HCT116 (cell line): ENCODE measurements at regions of chr9 and their contacts with region 1.

Region 1: GRCh38 chr9:127916665-127917613 is at the start of gene ST6GALNAC4:
- DNase-seq: no peak
- ATAC-seq: peak; percentile 86
- H3K4me3 ChIP-seq: peak within 1 kb of the TSS; percentile 85 to 91
- H3K27ac ChIP-seq: peak within 1 kb of the TSS; percentile 96
- H3K4me1 ChIP-seq: peaks cover 52 to 70% of the 10 kb centered on the region in 2 experiments
- H3K27me3 ChIP-seq: no peaks in the 10 kb centered on the region
- CTCF ChIP-seq: no peak
- POLR2A ChIP-seq: peak; percentile 22
- RAD21 ChIP-seq: no peak
- total RNA-seq, gene ST6GALNAC4: 49.4 TPM

Region 2: DNA sequence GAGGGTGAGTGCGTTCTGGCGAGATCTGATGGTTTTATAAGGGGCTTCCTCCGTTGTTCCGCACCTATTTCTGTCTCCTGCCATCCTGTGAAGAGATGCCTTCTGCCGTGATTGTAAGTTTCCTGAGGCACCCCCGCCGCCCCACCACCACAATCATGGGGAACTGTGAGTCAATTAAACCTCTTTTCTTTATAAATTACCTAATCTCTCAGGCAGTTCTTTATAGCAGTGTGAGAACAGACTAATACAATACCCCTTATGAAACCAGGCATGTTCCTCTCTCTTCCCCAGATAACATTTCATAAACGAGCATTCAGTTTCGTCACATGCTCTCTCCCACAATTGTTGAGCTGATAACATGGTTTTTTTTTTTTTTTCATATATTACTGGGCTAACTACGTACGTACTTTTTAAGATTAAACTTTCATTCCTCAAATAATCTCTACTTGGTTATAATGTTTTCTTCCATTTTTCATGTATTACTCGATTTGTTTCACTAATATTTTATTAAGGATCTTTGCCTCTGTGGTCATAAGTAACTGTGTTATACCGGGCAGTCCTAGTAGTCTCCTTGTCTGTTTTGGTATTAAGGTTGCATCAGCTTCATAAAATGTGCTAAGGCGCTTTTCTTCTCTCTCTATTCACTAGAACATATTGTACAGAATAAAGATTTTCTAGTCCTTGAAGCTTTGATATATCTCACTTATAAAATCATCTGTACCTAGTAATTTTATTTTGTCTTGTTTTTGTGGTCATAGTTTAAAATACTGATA is 1655.2 kb before region 1 on chr9:
- CTCF ChIA-PET with region 1: no interaction called
- POLR2A ChIA-PET with region 1: no interaction called
- RAD21 ChIA-PET with region 1: no interaction called
- intact Hi-C with region 1: no loop called
- DNase-seq: no peak
- ATAC-seq: no peak
- H3K4me3 ChIP-seq: no peak overlapping the region
- H3K27ac ChIP-seq: no peak overlapping the region
- H3K4me1 ChIP-seq: no peaks in the 10 kb centered on the region
- H3K27me3 ChIP-seq: no peaks in the 10 kb centered on the region
- CTCF ChIP-seq: no peak
- POLR2A ChIP-seq: no peak
- RAD21 ChIP-seq: no peak

Region 3: DNA sequence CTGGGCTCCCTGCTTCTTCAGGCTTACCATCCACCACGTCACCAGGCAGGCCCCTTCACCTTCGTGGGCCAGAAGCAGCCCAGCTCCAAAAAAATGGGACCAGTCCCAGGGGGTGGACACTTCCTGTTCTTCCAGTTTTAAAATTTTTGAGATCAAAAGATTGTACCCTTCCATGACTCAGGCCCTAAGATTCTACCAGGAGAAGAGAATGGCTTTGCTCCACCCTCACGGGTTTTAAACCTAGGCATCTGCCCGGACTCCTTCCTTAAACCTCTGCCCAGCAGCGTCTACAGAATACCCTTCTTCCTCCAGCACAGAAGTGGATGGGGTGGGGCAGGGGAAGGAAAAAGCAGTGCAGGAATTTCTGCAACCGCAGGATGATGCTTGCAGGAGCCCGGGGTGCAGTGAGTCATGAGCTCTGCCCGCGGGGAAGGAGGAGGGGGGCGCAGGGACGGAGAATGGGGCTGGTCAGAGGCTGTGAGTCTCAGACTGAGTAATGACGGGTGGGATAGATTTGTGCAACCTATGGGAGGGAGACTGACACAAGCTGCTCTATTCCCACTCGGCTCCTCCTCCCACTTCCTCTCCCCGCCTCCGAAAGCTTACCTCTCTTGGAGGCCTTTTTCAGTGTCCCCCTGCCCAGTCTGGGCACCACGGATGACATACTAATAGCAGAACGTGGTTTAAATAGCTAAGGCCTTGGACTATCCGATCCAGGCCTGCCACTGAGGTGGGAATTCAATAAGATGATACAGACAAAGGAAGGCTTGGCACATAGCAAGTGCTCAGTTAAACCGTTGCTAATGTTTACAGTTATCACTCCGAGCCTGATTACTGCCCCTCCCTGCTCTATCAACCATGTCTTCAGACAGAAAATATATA is 355.1 kb before region 1 on chr9:
- CTCF ChIA-PET with region 1: no interaction called
- POLR2A ChIA-PET with region 1: interaction called, 3 read pairs
- RAD21 ChIA-PET with region 1: no interaction called
- intact Hi-C with region 1: loop called (anchors 5 kb)
- DNase-seq: peak; percentile 97
- ATAC-seq: peak; percentile 82
- H3K4me3 ChIP-seq: peak overlapping the region; percentile 27 to 41
- H3K27ac ChIP-seq: peak overlapping the region; percentile 97
- H3K4me1 ChIP-seq: peaks cover 95 to 100% of the 10 kb centered on the region in 2 experiments
- H3K27me3 ChIP-seq: no peaks in the 10 kb centered on the region
- CTCF ChIP-seq: no peak
- POLR2A ChIP-seq: no peak
- RAD21 ChIP-seq: no peak

Region 4: GRCh38 chr9:127586537-127586936 is 330.4 kb before region 1 on chr9:
- CTCF ChIA-PET with region 1: interaction called, 3 read pairs
- POLR2A ChIA-PET with region 1: no interaction called
- RAD21 ChIA-PET with region 1: interaction called in 1 of 2 experiments, 3 read pairs
- intact Hi-C with region 1: loop called (anchors 1 kb)
- DNase-seq: no peak
- ATAC-seq: peak; percentile 88
- H3K4me3 ChIP-seq: no peak overlapping the region
- H3K27ac ChIP-seq: no peak overlapping the region
- H3K4me1 ChIP-seq: peaks cover 5 to 24% of the 10 kb centered on the region in 2 experiments; a peak in 3 of 4 replicates
- H3K27me3 ChIP-seq: no peaks in the 10 kb centered on the region
- CTCF ChIP-seq: peak in 2 of 3 experiments; percentile 82 to 87; a peak in 4 of 6 replicates
- POLR2A ChIP-seq: no peak
- RAD21 ChIP-seq: no peak

Region 5: GRCh38 chr9:127785023-127785932 is 131.7 kb before region 1 on chr9:
- CTCF ChIA-PET with region 1: interaction called, 5 read pairs
- POLR2A ChIA-PET with region 1: no interaction called
- RAD21 ChIA-PET with region 1: no interaction called
- intact Hi-C with region 1: loop called (anchors 5 kb)
- DNase-seq: peak; percentile 60
- ATAC-seq: peak; percentile 67
- H3K4me3 ChIP-seq: peak overlapping the region; percentile 45 to 90
- H3K27ac ChIP-seq: peak overlapping the region; percentile 98
- H3K4me1 ChIP-seq: peaks cover 11 to 14% of the 10 kb centered on the region in 2 experiments; a peak in 3 of 4 replicates
- H3K27me3 ChIP-seq: no peaks in the 10 kb centered on the region
- CTCF ChIP-seq: peak in 2 of 3 experiments; percentile 75 to 81; a peak in 4 of 6 replicates
- POLR2A ChIP-seq: no peak
- RAD21 ChIP-seq: no peak

Region 6: GRCh38 chr9:127802576-127803443 is 114.1 kb before region 1 on chr9 and contains the start of gene FPGS:
- CTCF ChIA-PET with region 1: interaction called, 6 read pairs
- POLR2A ChIA-PET with region 1: no interaction called
- RAD21 ChIA-PET with region 1: no interaction called
- intact Hi-C with region 1: loop called (anchors 2 kb)
- DNase-seq: peak; percentile 68
- ATAC-seq: peak; percentile 84
- H3K4me3 ChIP-seq: peak within 1 kb of the TSS; percentile 69 to 73
- H3K27ac ChIP-seq: peak within 1 kb of the TSS; percentile 74
- H3K4me1 ChIP-seq: peaks cover 19 to 27% of the 10 kb centered on the region in 2 experiments
- H3K27me3 ChIP-seq: no peaks in the 10 kb centered on the region
- CTCF ChIP-seq: no peak; a peak in 1 of 6 replicates
- POLR2A ChIP-seq: no peak
- RAD21 ChIP-seq: no peak
- total RNA-seq, gene FPGS: 70.6 TPM

Region 7: DNA sequence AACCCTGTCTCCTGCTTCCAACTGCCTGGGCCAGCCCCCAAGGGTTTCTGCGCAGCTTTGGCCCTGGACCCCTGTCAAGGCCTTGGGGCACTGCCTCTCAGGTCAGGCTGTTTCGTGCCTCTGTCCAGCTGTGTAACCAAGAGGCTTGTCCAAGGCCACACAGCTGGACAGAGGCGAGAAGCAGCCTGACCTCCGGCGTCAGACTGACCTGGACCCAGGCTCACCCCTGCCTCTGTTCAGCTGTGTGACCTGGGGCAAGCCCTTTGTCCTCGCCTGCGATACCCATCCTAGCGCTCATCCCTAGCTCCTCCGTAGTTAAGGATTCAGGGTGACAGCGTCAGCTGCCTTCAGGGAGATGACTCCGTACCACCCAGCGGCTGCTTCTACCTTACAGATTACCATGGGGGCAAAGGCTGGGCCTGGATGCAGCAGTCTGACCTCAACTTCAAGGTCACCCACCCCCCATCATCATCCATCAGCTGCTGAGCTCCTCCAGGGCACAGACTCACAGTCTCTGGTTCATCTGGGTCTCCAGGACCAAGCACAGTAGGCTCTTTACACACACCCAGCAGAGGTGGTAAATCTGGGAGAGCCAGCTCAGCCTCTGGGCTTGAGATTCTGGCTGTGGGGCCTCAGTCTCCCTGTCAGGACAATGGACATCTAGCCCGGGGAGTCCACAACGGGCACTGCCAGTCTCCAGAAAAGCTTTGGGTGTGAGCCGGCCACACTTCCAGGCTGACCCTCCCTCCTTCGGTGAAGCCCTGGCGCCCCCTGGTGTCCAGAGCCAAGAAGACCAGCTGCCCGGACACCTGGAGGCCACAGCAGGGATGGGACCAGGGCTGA is 47.4 kb before region 1 on chr9:
- CTCF ChIA-PET with region 1: interaction called, 13 read pairs
- POLR2A ChIA-PET with region 1: interaction called, 4 read pairs
- RAD21 ChIA-PET with region 1: interaction called in 1 of 2 experiments, 5 read pairs
- intact Hi-C with region 1: no loop called
- DNase-seq: peak; percentile 65
- ATAC-seq: peak; percentile 99
- H3K4me3 ChIP-seq: no peak overlapping the region
- H3K27ac ChIP-seq: no peak overlapping the region
- H3K4me1 ChIP-seq: peaks cover 5 to 15% of the 10 kb centered on the region in 2 experiments; a peak in 3 of 4 replicates
- H3K27me3 ChIP-seq: no peaks in the 10 kb centered on the region
- CTCF ChIP-seq: peak in 2 of 3 experiments; percentile 87 to 96; a peak in 4 of 6 replicates
- POLR2A ChIP-seq: no peak
- RAD21 ChIP-seq: no peak

Region 8: GRCh38 chr9:128034821-128035764 is 118.2 kb after region 1 on chr9:
- CTCF ChIA-PET with region 1: interaction called, 12 read pairs
- POLR2A ChIA-PET with region 1: interaction called, 6 read pairs
- RAD21 ChIA-PET with region 1: no interaction called
- intact Hi-C with region 1: no loop called
- DNase-seq: peak; percentile 85
- ATAC-seq: peak; percentile 92
- H3K4me3 ChIP-seq: no peak overlapping the region
- H3K27ac ChIP-seq: no peak overlapping the region
- H3K4me1 ChIP-seq: peaks cover 0 to 30% of the 10 kb centered on the region in 2 experiments; a peak in 2 of 4 replicates
- H3K27me3 ChIP-seq: no peaks in the 10 kb centered on the region
- CTCF ChIP-seq: peak; percentile 72 to 96 (median 87)
- POLR2A ChIP-seq: no peak
- RAD21 ChIP-seq: peak; percentile 99

Region 9: DNA sequence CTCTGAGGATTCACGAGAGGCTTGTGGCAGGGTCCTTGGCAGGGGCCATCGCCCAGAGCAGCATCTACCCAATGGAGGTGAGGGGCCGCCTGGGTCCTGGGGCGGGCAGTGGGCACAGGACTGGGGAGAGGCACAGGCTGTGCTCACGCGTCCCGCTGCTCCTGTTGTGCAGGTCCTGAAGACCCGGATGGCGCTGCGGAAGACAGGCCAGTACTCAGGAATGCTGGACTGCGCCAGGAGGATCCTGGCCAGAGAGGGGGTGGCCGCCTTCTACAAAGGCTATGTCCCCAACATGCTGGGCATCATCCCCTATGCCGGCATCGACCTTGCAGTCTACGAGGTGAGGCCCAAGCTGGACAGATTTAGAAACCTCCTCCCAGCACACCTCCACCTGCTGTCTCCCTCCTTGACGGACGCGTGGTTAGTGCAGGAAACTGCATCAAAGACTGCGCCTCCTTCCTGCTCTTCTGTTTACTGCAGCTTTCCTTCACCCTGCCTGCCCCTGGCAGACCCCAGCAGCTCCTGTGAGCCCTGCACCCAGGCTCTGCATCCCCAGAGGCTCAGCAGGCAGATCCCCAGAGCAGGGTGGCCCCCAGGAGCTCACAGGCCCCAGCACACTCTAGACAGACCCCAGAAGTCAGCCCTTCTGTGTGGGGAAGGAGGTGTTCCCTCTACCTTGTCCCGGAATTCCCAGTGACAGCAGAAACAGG is 189.4 kb after region 1 on chr9:
- CTCF ChIA-PET with region 1: no interaction called
- POLR2A ChIA-PET with region 1: no interaction called
- RAD21 ChIA-PET with region 1: no interaction called
- intact Hi-C with region 1: no loop called
- DNase-seq: no peak
- ATAC-seq: peak; percentile 50; the same call in 1 of the 2 replicates
- H3K4me3 ChIP-seq: no peak overlapping the region
- H3K27ac ChIP-seq: no peak overlapping the region
- H3K4me1 ChIP-seq: no peaks in the 10 kb centered on the region
- H3K27me3 ChIP-seq: no peaks in the 10 kb centered on the region
- CTCF ChIP-seq: no peak
- POLR2A ChIP-seq: no peak
- RAD21 ChIP-seq: no peak